Adrenal gland (tissue), 19 donors: ENCODE measurements at regions of chr2 and their contacts with region 1.

Region 1: DNA sequence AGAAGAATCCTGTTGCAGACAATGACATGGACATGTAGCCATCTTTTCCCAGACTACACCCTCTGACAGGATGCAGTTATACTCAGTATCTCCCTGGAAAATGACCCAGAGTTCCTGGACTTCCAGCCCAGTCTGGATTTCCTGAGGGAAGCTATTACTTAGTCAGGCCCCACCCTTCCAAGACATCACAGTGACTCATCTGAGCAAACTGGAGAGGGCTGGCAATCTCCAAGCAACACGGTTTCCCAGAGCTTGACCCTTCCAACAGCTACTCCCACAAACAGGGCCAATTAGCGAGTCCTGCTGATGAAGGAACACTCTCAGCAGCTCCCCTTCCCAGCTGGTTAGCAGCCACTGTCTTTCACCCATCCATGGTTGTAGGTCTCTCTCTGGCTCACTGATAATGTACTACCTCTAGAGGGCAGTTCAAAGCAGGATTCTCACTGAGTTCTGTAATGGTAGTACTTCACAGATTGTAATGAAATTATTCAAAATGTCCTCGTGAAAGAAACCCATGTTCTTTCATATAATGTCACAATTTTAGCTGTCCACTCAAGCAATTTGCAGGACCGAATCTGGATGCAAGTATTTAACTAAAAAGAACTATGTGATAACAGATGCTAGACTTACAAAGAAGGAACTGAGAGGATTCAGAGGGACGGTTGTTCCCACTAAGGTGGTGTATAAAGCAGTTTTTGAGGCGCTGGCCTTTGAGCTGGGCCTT is 110.2 kb downstream of the MDH1 start:
- DNase-seq: peak; percentile 29 to 68 (median 50)
- H3K4me3 ChIP-seq: no peak overlapping the region
- H3K27ac ChIP-seq: peak overlapping the region in 1 of 5 donors; percentile 46
- H3K4me1 ChIP-seq: no peaks in the 10 kb centered on the region
- H3K27me3 ChIP-seq: no peaks in the 10 kb centered on the region
- CTCF ChIP-seq: peak; percentile 21 to 65 (median 58)
- POLR2A ChIP-seq: no peak

Region 2: DNA sequence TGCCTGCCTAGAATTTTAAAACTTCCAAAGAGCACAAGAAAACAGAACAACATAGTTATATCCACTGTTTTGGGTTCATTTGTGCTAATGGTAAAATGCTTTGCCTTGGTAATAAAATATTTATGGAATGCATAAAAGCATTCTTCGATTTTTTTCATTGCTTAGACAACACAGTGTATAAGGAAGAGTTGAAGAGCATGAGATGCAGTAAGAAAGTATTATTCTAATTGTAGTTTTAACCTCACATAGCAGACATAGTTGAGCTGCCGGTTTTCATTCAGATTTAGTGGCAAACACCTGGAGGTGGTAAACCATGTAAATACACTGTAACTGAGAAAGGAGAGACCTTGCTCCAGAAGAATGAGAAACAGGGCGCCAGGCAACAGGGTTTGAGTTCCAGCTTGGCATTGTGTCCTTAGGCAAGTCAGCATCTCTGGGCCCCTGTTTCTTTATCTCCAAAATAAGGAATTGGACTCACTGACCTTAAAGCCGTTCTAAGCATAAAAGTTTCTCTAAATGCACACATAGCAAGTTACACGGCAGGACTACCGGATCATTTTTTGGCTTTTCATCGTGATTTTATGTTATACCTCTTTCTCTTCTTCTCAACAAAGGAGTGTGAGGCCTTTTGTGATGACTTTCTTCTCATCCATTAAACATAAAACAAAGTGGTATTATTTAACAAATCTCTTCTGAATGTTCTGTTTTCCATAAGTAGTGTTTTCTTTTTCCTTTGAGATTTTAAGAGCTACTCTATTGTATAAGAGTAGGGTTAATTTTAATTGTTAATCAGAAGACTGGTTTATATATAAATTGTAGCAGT is 150.6 kb after region 1 on chr2:
- intact Hi-C with region 1: loop called in 1 of 2 experiments (anchors 10 kb)
- DNase-seq: no peak
- H3K4me3 ChIP-seq: no peak overlapping the region
- H3K27ac ChIP-seq: no peak overlapping the region
- H3K4me1 ChIP-seq: peaks cover 15 to 81% of the 10 kb centered on the region in 2 donors
- H3K27me3 ChIP-seq: no peaks in the 10 kb centered on the region
- CTCF ChIP-seq: no peak
- POLR2A ChIP-seq: no peak

Region 3: DNA sequence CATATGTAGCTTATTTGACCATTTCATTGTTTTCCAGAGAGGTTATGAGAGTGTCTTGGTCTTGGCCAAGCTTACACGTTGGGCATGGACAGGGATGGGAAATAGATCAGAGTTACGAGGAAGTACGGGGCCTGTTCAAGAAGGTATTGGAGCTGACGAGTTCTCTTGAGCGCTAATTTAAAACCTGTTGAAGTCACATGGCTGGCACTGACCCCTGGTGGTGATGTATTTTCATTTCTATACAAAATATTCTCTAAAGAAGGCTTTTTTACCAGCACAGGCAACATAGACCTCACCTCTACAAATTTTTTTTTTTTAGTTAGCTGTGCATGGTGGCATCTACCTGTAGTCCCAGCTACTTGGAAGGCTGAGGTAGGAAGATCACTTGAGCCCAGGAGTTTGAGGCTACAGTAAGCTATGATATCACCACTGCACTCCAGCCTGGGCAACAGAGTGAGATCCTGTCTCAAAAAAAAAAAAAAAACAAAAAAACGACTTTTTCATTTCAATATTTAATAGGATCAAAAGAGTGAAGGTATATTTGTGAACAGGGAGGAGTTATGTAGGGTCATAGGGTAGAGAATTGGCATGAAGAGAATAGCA is 162.3 kb after region 1 on chr2:
- intact Hi-C with region 1: loop called (anchors 5 to 10 kb)
- DNase-seq: peak; percentile 29 to 79 (median 54)
- H3K4me3 ChIP-seq: no peak overlapping the region
- H3K27ac ChIP-seq: no peak overlapping the region
- H3K4me1 ChIP-seq: peaks cover 0 to 11% of the 10 kb centered on the region in 2 donors
- H3K27me3 ChIP-seq: no peaks in the 10 kb centered on the region
- CTCF ChIP-seq: peak; percentile 27 to 69 (median 59)
- POLR2A ChIP-seq: no peak